ENCODE measurements at regions of chr1 and their contacts with region 1.

Region 1: DNA sequence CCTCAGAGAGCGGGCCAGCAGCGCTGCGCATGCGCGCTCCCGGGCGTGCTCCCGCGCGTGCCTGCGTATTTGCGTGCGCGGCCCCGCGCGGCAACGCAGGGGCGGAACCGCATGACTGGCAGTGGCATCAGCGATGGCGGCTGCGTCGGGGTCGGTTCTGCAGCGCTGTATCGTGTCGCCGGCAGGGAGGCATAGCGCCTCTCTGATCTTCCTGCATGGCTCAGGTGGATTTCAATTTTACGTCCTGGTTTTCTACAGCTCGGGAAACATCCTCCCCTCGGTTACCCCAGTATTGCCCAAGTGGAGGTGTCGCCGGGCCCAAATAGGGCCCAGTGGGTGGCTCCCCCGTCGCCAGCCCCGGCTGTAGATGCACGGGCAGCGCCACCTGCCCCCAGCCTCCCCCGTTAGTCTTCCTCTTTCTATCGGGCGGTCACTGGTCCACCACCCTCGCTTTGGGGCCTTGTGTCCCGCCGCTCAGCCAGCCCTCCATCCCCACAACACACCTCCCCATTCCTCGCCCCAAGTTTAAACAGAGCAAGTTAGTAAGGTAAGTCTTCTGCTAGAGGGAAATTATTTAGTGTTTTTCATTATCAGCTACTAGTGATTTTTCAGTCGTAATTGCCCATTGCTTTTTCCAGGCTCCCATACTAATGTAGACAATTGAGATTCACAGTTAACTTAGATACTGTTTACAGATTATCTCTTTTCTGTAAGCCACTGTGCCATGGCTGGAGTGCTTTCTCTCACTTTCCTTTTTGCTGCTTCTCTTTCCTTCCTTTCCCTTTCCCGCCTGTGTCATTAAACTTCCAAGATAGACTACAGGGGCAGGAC is at the start of gene LYPLAL1:
- DNase-seq: peak; percentile 94
- ATAC-seq: peak; percentile 81
- H3K4me3 ChIP-seq: peak within 1 kb of the TSS; percentile 70 to 87 (median 80)
- H3K4me3 Mint-ChIP-seq: peak within 1 kb of the TSS; percentile 99
- H3K27ac ChIP-seq: peak within 1 kb of the TSS; percentile 93 to 95
- H3K27ac Mint-ChIP-seq: peak within 1 kb of the TSS; percentile 99
- H3K4me1 ChIP-seq: peaks cover 27 to 38% of the 10 kb centered on the region in 2 donors
- H3K4me1 Mint-ChIP-seq: peaks cover 54% of the 10 kb centered on the region
- H3K27me3 ChIP-seq: no peaks in the 10 kb centered on the region
- H3K27me3 Mint-ChIP-seq: no peaks in the 10 kb centered on the region
- CTCF ChIP-seq: peak; percentile 19
- total RNA-seq, gene LYPLAL1: 63.6 and 65.4 TPM in 2 replicates

Region 2: GRCh38 chr1:218284934-218285635 is 888.9 kb before region 1 on chr1 and contains the start of gene RRP15:
- CTCF ChIA-PET with region 1: no interaction called
- POLR2A ChIA-PET with region 1: no interaction called
- intact Hi-C with region 1: loop called (anchors 1 kb)
- DNase-seq: peak; percentile 92
- ATAC-seq: peak; percentile 97
- H3K4me3 ChIP-seq: peak within 1 kb of the TSS; percentile 76 to 100 (median 87)
- H3K4me3 Mint-ChIP-seq: peak within 1 kb of the TSS; percentile 97
- H3K27ac ChIP-seq: peak within 1 kb of the TSS; percentile 76 to 81
- H3K27ac Mint-ChIP-seq: peak within 1 kb of the TSS; percentile 98
- H3K4me1 ChIP-seq: peaks cover 15 to 17% of the 10 kb centered on the region in 2 donors
- H3K4me1 Mint-ChIP-seq: peaks cover 31% of the 10 kb centered on the region
- H3K27me3 ChIP-seq: peaks cover 0 to 11% (median 2%) of the 10 kb centered on the region in 4 experiments
- H3K27me3 Mint-ChIP-seq: peaks cover 16% of the 10 kb centered on the region
- CTCF ChIP-seq: no peak
- total RNA-seq, gene RRP15: 16.4 and 20.2 TPM in 2 replicates

Region 3: GRCh38 chr1:218980881-218981280 is 193.1 kb before region 1 on chr1:
- CTCF ChIA-PET with region 1: no interaction called
- POLR2A ChIA-PET with region 1: no interaction called
- intact Hi-C with region 1: no loop called
- DNase-seq: no peak
- ATAC-seq: no peak
- H3K4me3 ChIP-seq: no peak overlapping the region
- H3K4me3 Mint-ChIP-seq: no peak overlapping the region
- H3K27ac ChIP-seq: no peak overlapping the region
- H3K27ac Mint-ChIP-seq: no peak overlapping the region
- H3K4me1 ChIP-seq: no peaks in the 10 kb centered on the region
- H3K4me1 Mint-ChIP-seq: no peaks in the 10 kb centered on the region
- H3K27me3 ChIP-seq: no peaks in the 10 kb centered on the region
- H3K27me3 Mint-ChIP-seq: no peaks in the 10 kb centered on the region
- CTCF ChIP-seq: no peak

Region 4: DNA sequence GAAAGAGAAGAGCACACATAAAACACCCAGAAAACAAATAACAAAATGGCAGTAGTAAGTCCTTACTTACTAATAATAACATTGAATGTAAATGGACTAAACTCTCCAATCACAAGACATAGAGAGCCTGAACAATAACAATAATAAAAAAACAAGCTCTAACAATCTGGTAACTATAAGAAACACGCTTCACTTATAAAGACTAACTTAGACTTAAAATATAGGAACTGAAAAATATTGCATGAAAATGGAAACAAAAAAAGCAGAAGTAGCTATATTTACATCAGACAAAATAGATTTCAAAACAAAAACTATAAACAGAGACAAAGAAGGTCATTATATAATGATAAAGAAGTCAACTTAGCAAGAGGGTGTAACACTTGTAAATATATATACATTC is 83.4 kb before region 1 on chr1:
- CTCF ChIA-PET with region 1: interaction called, 3 read pairs
- POLR2A ChIA-PET with region 1: no interaction called
- intact Hi-C with region 1: loop called (anchors 2 kb)
- DNase-seq: peak; percentile 65
- ATAC-seq: peak; percentile 78
- H3K4me3 ChIP-seq: peak overlapping the region in 1 of 5 experiments; percentile 26
- H3K4me3 Mint-ChIP-seq: peak overlapping the region; percentile 29
- H3K27ac ChIP-seq: peak overlapping the region; percentile 70 to 80
- H3K27ac Mint-ChIP-seq: peak overlapping the region; percentile 77
- H3K4me1 ChIP-seq: peaks cover 29 to 41% of the 10 kb centered on the region in 2 donors
- H3K4me1 Mint-ChIP-seq: peaks cover 53% of the 10 kb centered on the region
- H3K27me3 ChIP-seq: no peaks in the 10 kb centered on the region
- H3K27me3 Mint-ChIP-seq: no peaks in the 10 kb centered on the region
- CTCF ChIP-seq: no peak

Region 5: DNA sequence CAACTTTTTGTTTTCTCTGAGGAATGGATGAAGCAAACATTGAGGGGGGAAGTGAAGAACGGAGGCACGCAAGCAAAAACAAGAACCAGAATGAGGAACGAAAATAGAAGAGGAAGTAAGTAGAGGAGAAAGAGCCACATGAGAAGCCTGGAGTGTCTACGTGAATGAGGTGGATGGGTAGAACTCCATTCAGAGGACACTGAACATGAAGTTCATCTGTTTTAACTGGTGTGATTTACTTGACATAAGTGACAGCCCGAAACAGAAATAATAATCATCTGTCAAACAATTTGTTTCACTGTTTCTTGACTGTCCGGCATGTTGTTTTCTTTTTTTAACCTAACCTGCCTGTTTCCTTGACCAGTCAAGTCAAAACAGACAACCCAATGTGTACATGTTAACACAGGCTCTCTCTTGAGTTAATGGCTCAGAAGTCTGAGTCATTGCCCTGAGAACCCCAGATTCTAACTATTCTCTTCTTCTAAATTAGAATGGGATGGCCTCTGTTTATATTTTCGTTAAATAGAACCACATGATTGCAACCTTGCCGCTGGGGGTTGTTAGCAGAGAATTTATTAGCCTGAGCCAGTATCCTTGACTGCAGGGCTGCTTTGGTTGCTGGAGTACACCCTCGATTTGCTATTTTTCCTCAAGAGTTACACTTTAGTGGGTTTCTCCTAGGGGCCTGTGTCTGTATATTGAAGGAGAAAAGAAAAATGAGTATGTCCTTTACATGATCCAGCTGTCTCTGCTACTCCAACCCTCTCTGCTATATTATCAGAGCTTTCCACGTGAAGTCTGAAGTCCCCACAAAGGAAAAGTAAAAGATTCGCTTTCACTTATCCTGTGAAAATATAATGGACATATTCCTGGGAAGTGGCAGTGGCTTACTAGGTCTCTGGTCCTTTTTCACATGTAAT is 287.2 kb after region 1 on chr1:
- CTCF ChIA-PET with region 1: no interaction called
- POLR2A ChIA-PET with region 1: interaction called, 12 read pairs
- intact Hi-C with region 1: no loop called
- DNase-seq: peak; percentile 46
- ATAC-seq: peak; percentile 81
- H3K4me3 ChIP-seq: no peak overlapping the region
- H3K4me3 Mint-ChIP-seq: peak overlapping the region; percentile 5
- H3K27ac ChIP-seq: peak overlapping the region in 1 of 2 donors; percentile 8
- H3K27ac Mint-ChIP-seq: peak overlapping the region; percentile 54
- H3K4me1 ChIP-seq: peaks cover 11 to 20% of the 10 kb centered on the region in 2 donors
- H3K4me1 Mint-ChIP-seq: peaks cover 36% of the 10 kb centered on the region
- H3K27me3 ChIP-seq: no peaks in the 10 kb centered on the region
- H3K27me3 Mint-ChIP-seq: no peaks in the 10 kb centered on the region
- CTCF ChIP-seq: no peak

Region 6: DNA sequence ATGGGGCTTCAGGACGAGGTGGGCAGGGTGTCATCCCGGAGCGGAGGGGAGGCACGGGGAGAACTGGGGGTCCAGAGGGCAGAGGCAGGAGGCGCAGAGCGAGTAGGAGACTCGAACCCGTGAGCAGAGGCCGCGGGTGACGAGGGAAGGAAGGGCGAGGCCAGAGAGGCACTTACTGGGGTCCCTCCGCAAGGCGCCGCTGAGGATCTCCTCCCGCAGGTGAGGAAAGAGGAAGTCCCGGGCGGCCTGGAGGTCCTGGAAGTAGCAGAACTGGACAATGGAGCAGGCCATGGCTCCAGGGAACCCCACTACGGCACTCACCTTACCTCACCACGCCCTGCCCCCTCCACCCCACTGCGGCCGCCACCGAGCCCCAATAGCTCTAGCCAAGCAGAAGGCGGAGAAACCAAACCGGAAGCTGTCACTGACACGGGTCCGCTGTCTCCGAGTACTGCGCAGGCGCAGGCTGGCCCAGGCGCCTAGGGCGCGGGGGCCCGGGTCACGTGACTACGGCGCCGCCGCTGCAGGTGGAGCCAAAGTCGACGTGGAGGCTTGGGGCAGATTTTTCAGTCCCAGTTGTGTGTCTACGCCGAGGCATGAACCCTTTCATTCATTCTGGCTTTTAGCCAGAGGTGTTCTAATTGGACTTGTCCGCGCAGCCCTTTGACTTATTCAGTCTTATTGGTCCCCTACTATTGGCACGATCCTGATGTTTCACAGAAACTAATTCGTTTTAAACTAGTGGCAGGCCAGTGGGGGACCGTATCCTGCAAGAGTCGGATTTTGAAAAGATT is 1098.3 kb after region 1 on chr1 and contains the start of gene RAB3GAP2:
- CTCF ChIA-PET with region 1: no interaction called
- POLR2A ChIA-PET with region 1: no interaction called
- intact Hi-C with region 1: loop called (anchors 10 kb)
- DNase-seq: peak; percentile 98
- ATAC-seq: peak; percentile 94
- H3K4me3 ChIP-seq: peak within 1 kb of the TSS; percentile 87 to 96 (median 90)
- H3K4me3 Mint-ChIP-seq: no peak within 1 kb of the TSS
- H3K27ac ChIP-seq: peak within 1 kb of the TSS; percentile 90 to 95
- H3K27ac Mint-ChIP-seq: no peak within 1 kb of the TSS
- H3K4me1 ChIP-seq: peaks cover 27% of the 10 kb centered on the region in 2 donors
- H3K4me1 Mint-ChIP-seq: peaks cover 18% of the 10 kb centered on the region
- H3K27me3 ChIP-seq: no peaks in the 10 kb centered on the region
- H3K27me3 Mint-ChIP-seq: peaks cover 6% of the 10 kb centered on the region
- CTCF ChIP-seq: no peak
- total RNA-seq, gene RAB3GAP2: 70.5 and 72.0 TPM in 2 replicates